ENCODE measurements at regions of chr3 and their contacts with region 1.

Region 1: DNA sequence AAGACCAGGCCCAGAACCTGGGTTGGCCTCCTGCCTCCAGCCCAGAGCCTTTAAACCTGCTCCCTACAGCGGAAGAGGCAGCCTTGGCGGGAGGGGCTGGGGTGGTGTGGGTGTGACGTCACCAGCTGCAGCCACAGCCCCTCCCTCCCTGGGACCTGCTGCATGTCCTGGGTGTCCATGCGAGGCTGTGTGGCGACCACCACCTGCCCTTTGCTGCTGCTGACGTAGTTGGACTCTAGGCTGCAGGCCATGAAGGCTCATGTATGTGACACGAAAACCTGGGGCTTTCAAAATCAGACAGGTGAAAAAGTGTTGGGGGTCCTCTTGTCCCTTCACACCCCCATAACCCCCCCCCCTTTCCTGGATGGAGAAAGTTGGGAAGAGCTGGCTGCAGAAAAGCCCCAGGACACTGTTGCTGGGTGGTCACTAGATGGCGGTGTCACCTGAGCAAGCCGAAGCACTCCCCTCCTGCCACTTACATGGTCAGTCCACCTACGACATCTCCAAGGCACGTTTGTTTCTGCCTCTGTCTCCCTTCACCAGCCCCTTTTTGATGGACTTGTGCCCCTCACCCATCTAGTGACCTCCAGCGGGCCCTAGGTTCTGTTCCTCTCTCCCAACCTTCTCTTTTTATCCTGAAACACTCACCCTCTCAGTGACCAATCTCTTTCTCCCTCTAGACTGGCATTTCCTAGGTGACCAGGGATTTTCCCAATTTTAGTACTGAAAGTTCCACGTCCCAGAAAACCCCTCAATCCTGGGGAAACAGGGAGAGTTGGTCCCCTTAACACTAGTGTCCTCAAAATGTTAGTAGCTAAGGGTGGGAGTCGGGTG is 35.2 kb downstream of the SLC6A20 start:
- DNase-seq: peak; percentile 23
- H3K4me3 ChIP-seq: no peak overlapping the region
- H3K27ac ChIP-seq: no peak overlapping the region
- H3K4me1 ChIP-seq: no peaks in the 10 kb centered on the region
- H3K27me3 ChIP-seq: no peaks in the 10 kb centered on the region
- CTCF ChIP-seq: peak; percentile 58

Region 2: GRCh38 chr3:45929042-45929679 is 168.1 kb after region 1 on chr3:
- CTCF ChIA-PET with region 1: interaction called, 12 read pairs
- POLR2A ChIA-PET with region 1: no interaction called
- intact Hi-C with region 1: loop called (anchors 1 kb)
- DNase-seq: peak; percentile 24
- H3K4me3 ChIP-seq: no peak overlapping the region
- H3K27ac ChIP-seq: no peak overlapping the region
- H3K4me1 ChIP-seq: no peaks in the 10 kb centered on the region
- H3K27me3 ChIP-seq: no peaks in the 10 kb centered on the region
- CTCF ChIP-seq: peak; percentile 55

Region 3: DNA sequence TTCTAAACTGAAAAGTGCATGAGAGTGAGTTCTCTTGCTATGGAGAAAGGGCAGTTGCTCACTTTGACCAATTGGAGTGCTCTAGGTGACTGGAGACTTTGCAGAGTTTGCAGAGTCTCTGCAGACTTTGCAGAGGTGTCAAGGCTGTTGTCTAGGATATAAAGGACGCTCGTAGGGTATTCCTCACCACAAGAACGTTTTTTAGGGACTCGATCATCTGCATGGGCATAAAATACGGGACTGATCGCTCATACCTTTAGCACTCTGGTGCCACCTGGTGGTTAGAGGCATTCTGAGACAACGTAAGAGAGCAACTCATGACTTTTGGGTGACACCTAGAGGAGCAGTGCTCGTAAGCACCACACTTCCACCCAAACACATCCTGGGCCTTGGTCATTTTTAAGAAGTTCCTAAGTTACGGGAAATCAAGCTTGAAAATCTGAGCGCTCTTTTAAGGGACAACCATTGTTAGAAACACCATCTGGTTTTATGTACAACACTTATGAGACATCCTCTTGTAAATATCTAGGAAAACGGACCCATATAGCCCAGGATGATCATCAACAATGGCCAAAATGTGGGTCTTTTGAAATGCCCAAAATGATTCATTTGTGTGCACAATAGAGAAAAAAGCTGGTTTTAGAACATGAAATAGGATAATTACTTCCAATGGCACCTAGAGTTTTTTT is 317.8 kb after region 1 on chr3:
- CTCF ChIA-PET with region 1: no interaction called
- POLR2A ChIA-PET with region 1: no interaction called
- intact Hi-C with region 1: loop called (anchors 5 kb)
- DNase-seq: peak; percentile 83
- H3K4me3 ChIP-seq: no peak overlapping the region
- H3K27ac ChIP-seq: no peak overlapping the region
- H3K4me1 ChIP-seq: no peaks in the 10 kb centered on the region
- H3K27me3 ChIP-seq: no peaks in the 10 kb centered on the region
- CTCF ChIP-seq: peak; percentile 86

Measured in A673 (cell line).